Aorta (tissue), 5 donors: ENCODE measurements at regions of chr7 and their contacts with region 1.

Region 1: GRCh38 chr7:70040970-70041766 is 442.9 kb downstream of the AUTS2 start:
- DNase-seq: no peak
- ATAC-seq: no peak
- H3K4me3 ChIP-seq: no peak overlapping the region
- H3K27ac ChIP-seq: no peak overlapping the region
- H3K4me1 ChIP-seq: peaks cover 0 to 3% of the 10 kb centered on the region in 2 donors
- H3K27me3 ChIP-seq: no peaks in the 10 kb centered on the region

Region 2: GRCh38 chr7:70156057-70156456 is 114.9 kb after region 1 on chr7:
- intact Hi-C with region 1: loop called in 1 of 2 experiments (anchors 2 kb)
- DNase-seq: no peak
- ATAC-seq: no peak
- H3K4me3 ChIP-seq: no peak overlapping the region
- H3K27ac ChIP-seq: no peak overlapping the region
- H3K4me1 ChIP-seq: no peaks in the 10 kb centered on the region
- H3K27me3 ChIP-seq: no peaks in the 10 kb centered on the region